ENCODE measurements at regions of chr6 and their contacts with region 1.

Region 1: GRCh38 chr6:107731422-107732319 is 92.4 kb downstream of the SCML4 start:
- DNase-seq: no peak
- H3K4me3 Mint-ChIP-seq: peak overlapping the region; percentile 74
- H3K27ac Mint-ChIP-seq: peak overlapping the region; percentile 48
- H3K4me1 Mint-ChIP-seq: peaks cover 66% of the 10 kb centered on the region
- H3K27me3 Mint-ChIP-seq: peaks cover 25% of the 10 kb centered on the region

Region 2: DNA sequence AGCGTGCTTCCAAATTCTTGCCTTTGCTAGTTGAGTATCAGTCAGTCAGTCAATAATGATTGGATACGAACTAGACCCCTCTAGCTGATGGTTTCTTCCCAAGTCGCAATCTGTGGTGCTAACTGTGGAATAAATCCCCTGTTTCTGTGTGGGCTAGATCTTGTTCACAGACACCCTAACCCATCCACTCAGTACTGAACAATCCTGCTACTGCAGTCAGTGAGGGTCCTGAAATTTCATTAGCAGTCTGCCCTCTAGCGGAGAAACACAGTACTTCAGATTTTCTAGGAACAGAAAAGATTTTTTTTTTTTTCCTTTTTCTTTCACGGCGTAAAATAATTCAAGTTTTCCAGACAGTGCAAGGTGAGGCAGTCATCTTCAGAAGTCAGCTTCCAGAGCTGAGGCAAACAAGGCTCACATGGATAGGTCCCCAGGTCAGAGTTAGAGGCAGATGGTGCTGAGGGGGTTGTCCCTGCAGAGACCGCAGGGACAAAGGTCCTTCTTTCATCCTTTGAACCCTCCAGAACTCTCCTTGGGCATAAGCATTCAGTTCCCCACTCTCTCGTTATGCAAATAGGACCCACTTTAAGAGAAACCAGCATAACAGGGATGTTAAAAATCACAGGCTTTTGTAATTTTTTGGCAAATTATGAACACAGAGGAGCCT is 27.2 kb before region 1 on chr6:
- CTCF ChIA-PET with region 1: interaction called, 10 read pairs
- POLR2A ChIA-PET with region 1: no interaction called
- DNase-seq: no peak
- H3K4me3 Mint-ChIP-seq: no peak overlapping the region
- H3K27ac Mint-ChIP-seq: no peak overlapping the region
- H3K4me1 Mint-ChIP-seq: peaks cover 14% of the 10 kb centered on the region
- H3K27me3 Mint-ChIP-seq: no peaks in the 10 kb centered on the region

Region 3: GRCh38 chr6:107786709-107787588 is 55.3 kb after region 1 on chr6:
- CTCF ChIA-PET with region 1: interaction called, 4 read pairs
- POLR2A ChIA-PET with region 1: interaction called, 10 read pairs
- DNase-seq: peak; percentile 61
- H3K4me3 Mint-ChIP-seq: peak overlapping the region; percentile 54
- H3K27ac Mint-ChIP-seq: peak overlapping the region; percentile 82
- H3K4me1 Mint-ChIP-seq: peaks cover 45% of the 10 kb centered on the region
- H3K27me3 Mint-ChIP-seq: peaks cover 2% of the 10 kb centered on the region

Region 4: DNA sequence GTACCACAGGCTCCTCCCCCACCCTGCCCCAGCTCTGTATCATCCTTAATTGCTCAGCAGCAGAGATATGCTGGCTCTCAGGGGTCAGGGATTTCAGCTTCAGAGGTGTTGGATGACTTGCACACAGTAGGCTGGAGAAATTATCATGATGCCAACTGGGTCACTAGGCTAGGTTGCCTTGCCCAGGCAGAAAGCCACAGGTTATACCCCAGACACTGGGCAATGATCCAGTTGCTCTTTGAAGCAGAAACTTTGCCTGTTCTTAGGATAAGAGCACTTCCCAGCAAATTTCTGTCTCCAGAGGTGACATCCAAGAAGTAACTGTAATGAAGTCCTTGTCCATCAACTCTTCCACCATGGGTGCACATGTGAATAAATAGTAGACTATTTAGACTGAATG is 130.7 kb after region 1 on chr6:
- CTCF ChIA-PET with region 1: no interaction called
- POLR2A ChIA-PET with region 1: no interaction called
- DNase-seq: no peak
- H3K4me3 Mint-ChIP-seq: no peak overlapping the region
- H3K27ac Mint-ChIP-seq: no peak overlapping the region
- H3K4me1 Mint-ChIP-seq: peaks cover 1% of the 10 kb centered on the region
- H3K27me3 Mint-ChIP-seq: peaks cover 2% of the 10 kb centered on the region